GM12878 (cell line): ENCODE measurements at regions of chr6 and their contacts with region 1.

Region 1: GRCh38 chr6:32589598-32590449 is at the start of gene HLA-DRB1:
- DNase-seq: peak; percentile 91
- ATAC-seq: peak; percentile 89
- H3K4me3 ChIP-seq: peak within 1 kb of the TSS; percentile 72
- H3K27ac ChIP-seq: peak within 1 kb of the TSS; percentile 93
- H3K4me1 ChIP-seq: peaks cover 4% of the 10 kb centered on the region; the same call in 1 of the 2 replicates
- H3K27me3 ChIP-seq: no peaks in the 10 kb centered on the region
- CTCF ChIP-seq: no peak
- EP300 ChIP-seq: peak in 1 of 2 experiments; percentile 20; a peak in 1 of 4 replicates
- POLR2A ChIP-seq: peak; percentile 82
- RAD21 ChIP-seq: no peak
- polyA plus RNA-seq, gene HLA-DRB1: 312 to 364 TPM

Region 2: DNA sequence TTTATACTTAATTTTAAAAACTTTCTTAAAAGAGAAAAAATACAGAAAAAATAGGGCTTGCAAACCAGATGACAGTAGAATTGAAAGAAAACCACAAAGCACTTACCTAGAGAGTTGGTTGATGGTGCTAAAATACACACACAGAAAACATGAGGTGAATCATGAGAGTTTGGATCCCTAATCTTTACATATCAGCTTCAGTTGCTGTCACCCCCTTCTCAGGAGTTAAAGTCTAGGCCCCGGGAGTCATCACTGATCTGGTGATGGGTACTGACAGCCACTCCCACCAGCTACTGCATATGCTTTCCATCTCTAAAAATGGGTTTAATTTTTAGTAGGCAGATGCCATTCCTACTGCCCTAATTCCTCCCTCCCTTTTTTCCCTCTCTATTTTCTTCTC is 234.8 kb before region 1 on chr6:
- CTCF ChIA-PET with region 1: no interaction called
- POLR2A ChIA-PET with region 1: no interaction called
- RAD21 ChIA-PET with region 1: no interaction called
- SMC1A ChIA-PET with region 1: no interaction called
- in situ Hi-C with region 1: no loop called
- intact Hi-C with region 1: no loop called
- DNase-seq: no peak
- ATAC-seq: no peak
- H3K4me3 ChIP-seq: no peak overlapping the region
- H3K27ac ChIP-seq: no peak overlapping the region
- H3K4me1 ChIP-seq: no peaks in the 10 kb centered on the region
- H3K27me3 ChIP-seq: peaks cover 0 to 3% of the 10 kb centered on the region in 2 experiments; a peak in 1 of 4 replicates
- CTCF ChIP-seq: no peak
- EP300 ChIP-seq: no peak
- POLR2A ChIP-seq: no peak
- RAD21 ChIP-seq: no peak

Region 3: DNA sequence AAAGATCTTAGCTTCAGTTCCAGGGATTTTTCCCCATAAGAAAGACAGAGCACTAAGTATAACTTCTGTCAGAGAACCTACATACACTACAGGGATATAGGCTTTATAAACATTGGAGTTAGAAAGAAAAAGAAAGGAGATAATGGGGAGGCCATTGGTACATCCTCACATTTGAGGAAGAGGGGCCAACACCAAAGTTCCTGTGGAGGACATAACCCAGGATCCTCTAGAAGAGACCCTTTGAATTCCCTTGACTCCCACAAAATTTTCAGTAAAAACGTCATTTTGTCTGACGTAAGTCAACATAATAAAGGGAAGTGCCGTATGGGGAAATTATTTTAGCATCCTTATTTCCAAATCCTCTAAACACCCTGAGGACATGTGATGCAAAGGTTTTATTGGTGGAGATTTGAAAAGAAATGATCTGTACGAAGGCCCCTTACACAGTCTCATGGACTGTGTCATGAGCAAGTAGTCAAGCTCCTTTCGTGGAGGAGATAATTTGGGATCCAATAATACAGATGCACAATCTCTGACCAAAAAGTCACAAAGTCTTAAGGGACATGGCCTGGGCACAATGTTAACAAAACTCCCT is 116.9 kb before region 1 on chr6:
- CTCF ChIA-PET with region 1: no interaction called
- POLR2A ChIA-PET with region 1: interaction called, 11 read pairs
- RAD21 ChIA-PET with region 1: interaction called, 3 read pairs
- SMC1A ChIA-PET with region 1: interaction called, 3 read pairs
- in situ Hi-C with region 1: no loop called
- intact Hi-C with region 1: no loop called
- DNase-seq: no peak
- ATAC-seq: peak; percentile 29
- H3K4me3 ChIP-seq: peak overlapping the region; percentile 39; the same call in 1 of the 2 replicates
- H3K27ac ChIP-seq: peak overlapping the region; percentile 90
- H3K4me1 ChIP-seq: peaks cover 9% of the 10 kb centered on the region
- H3K27me3 ChIP-seq: no peaks in the 10 kb centered on the region
- CTCF ChIP-seq: no peak
- EP300 ChIP-seq: no peak
- POLR2A ChIP-seq: no peak
- RAD21 ChIP-seq: no peak

Region 4: DNA sequence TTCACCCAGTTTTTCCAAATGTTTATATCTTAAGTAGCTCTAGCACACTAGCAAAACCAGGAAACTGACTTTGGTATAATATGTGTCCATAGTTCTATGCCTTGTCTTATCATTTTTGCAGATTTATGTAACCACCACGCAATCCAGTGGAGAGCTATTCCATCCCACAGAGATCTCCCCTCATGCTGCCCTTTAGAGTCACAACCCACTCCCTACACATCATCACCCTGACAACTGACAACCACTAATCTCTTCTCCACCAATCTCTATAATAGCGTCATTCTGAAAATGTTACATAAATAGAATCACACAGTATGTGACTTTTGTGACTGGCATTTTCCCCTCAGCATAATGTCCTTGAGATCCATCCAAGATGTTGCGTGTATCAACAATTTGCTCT is 88.8 kb before region 1 on chr6:
- CTCF ChIA-PET with region 1: no interaction called
- POLR2A ChIA-PET with region 1: no interaction called
- RAD21 ChIA-PET with region 1: no interaction called
- SMC1A ChIA-PET with region 1: no interaction called
- in situ Hi-C with region 1: no loop called
- intact Hi-C with region 1: no loop called
- DNase-seq: no peak
- ATAC-seq: no peak
- H3K4me3 ChIP-seq: no peak overlapping the region
- H3K27ac ChIP-seq: no peak overlapping the region
- H3K4me1 ChIP-seq: no peaks in the 10 kb centered on the region
- H3K27me3 ChIP-seq: no peaks in the 10 kb centered on the region
- CTCF ChIP-seq: no peak
- EP300 ChIP-seq: no peak
- POLR2A ChIP-seq: no peak
- RAD21 ChIP-seq: no peak

Region 5: GRCh38 chr6:32558426-32559057 is 31.3 kb before region 1 on chr6:
- CTCF ChIA-PET with region 1: no interaction called
- POLR2A ChIA-PET with region 1: interaction called, 6 read pairs
- RAD21 ChIA-PET with region 1: interaction called, 4 read pairs
- SMC1A ChIA-PET with region 1: interaction called, 3 read pairs
- in situ Hi-C with region 1: no loop called
- intact Hi-C with region 1: loop called (anchors 2 kb)
- DNase-seq: no peak
- ATAC-seq: peak; percentile 84
- H3K4me3 ChIP-seq: no peak overlapping the region
- H3K27ac ChIP-seq: no peak overlapping the region
- H3K4me1 ChIP-seq: no peaks in the 10 kb centered on the region; the same call in 1 of the 2 replicates
- H3K27me3 ChIP-seq: no peaks in the 10 kb centered on the region
- CTCF ChIP-seq: no peak; a peak in 1 of 6 replicates
- EP300 ChIP-seq: no peak
- POLR2A ChIP-seq: no peak
- RAD21 ChIP-seq: no peak

Region 6: GRCh38 chr6:32568561-32568960 is 21.3 kb before region 1 on chr6:
- CTCF ChIA-PET with region 1: no interaction called
- POLR2A ChIA-PET with region 1: no interaction called
- RAD21 ChIA-PET with region 1: no interaction called
- SMC1A ChIA-PET with region 1: no interaction called
- in situ Hi-C with region 1: no loop called
- intact Hi-C with region 1: no loop called
- DNase-seq: no peak
- ATAC-seq: no peak
- H3K4me3 ChIP-seq: no peak overlapping the region
- H3K27ac ChIP-seq: no peak overlapping the region
- H3K4me1 ChIP-seq: no peaks in the 10 kb centered on the region
- H3K27me3 ChIP-seq: no peaks in the 10 kb centered on the region
- CTCF ChIP-seq: no peak
- EP300 ChIP-seq: no peak
- POLR2A ChIP-seq: no peak
- RAD21 ChIP-seq: no peak

Region 7: DNA sequence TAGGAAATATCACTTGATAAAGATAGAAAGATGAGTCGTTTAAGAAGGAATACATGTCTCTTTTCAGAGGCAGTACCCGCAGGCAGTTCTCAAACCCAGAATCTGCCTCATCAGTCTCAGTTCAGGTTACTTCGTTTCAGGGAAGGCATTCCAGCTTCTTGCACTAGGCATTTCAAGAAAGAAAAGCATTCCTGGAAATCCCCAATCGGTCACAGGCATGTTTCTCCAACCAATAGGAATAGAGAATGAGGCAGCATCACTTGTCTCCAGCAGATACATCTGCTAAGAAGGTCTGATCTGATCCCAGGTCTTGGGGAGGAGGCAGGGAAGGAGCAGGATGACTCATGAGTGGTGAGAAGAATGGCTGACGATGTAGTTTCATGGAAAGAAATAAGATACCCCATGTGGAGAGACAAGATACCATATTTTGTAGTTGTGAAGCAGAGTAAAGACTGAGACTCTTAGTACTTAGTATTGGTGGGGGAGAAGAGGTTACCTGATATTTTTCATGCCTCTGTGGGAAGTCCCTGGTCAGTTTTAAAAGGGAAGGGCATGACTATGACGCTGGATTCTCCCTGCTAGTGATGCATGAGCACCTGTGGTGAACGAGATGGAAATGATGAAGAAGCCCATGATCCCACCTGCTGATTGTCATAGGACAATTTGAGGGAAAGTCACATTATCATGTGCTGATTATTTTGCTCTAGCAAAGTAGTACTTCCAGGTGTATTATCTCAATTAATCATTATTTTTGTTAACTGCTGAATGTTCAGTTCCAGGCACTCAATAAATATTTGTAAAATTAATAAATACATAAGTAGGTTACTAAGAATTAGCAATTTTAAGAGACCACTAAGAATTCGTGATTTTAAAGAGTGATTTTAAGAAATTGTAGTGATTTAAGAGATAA is 20.2 kb after region 1 on chr6:
- CTCF ChIA-PET with region 1: interaction called, 5 read pairs
- POLR2A ChIA-PET with region 1: interaction called, 34 read pairs
- RAD21 ChIA-PET with region 1: no interaction called
- SMC1A ChIA-PET with region 1: interaction called, 23 read pairs
- in situ Hi-C with region 1: no loop called
- intact Hi-C with region 1: loop called (anchors 2 kb)
- DNase-seq: peak; percentile 100
- ATAC-seq: peak; percentile 84
- H3K4me3 ChIP-seq: peak overlapping the region; percentile 3; the same call in 1 of the 2 replicates
- H3K27ac ChIP-seq: peak overlapping the region; percentile 95
- H3K4me1 ChIP-seq: peaks cover 17% of the 10 kb centered on the region
- H3K27me3 ChIP-seq: no peaks in the 10 kb centered on the region
- CTCF ChIP-seq: no peak
- EP300 ChIP-seq: peak; percentile 30 to 68; a peak in 2 of 4 replicates
- POLR2A ChIP-seq: peak; percentile 59; the same call in 1 of the 2 replicates
- RAD21 ChIP-seq: no peak

Region 8: GRCh38 chr6:32642720-32643106 is 52.9 kb after region 1 on chr6:
- CTCF ChIA-PET with region 1: interaction called, 7 read pairs
- POLR2A ChIA-PET with region 1: interaction called, 77 read pairs
- RAD21 ChIA-PET with region 1: interaction called, 12 read pairs
- SMC1A ChIA-PET with region 1: interaction called, 18 read pairs
- in situ Hi-C with region 1: no loop called
- intact Hi-C with region 1: loop called (anchors 5 kb)
- DNase-seq: no peak
- ATAC-seq: peak; percentile 45
- H3K4me3 ChIP-seq: no peak overlapping the region
- H3K27ac ChIP-seq: no peak overlapping the region
- H3K4me1 ChIP-seq: peaks cover 4% of the 10 kb centered on the region
- H3K27me3 ChIP-seq: no peaks in the 10 kb centered on the region
- CTCF ChIP-seq: peak in 1 of 3 experiments; percentile 2; a peak in 1 of 6 replicates
- EP300 ChIP-seq: no peak
- POLR2A ChIP-seq: peak; percentile 53; the same call in 1 of the 2 replicates
- RAD21 ChIP-seq: no peak

Region 9: GRCh38 chr6:33040157-33040556 is 450.3 kb after region 1 on chr6:
- CTCF ChIA-PET with region 1: no interaction called
- POLR2A ChIA-PET with region 1: no interaction called
- RAD21 ChIA-PET with region 1: no interaction called
- SMC1A ChIA-PET with region 1: no interaction called
- in situ Hi-C with region 1: no loop called
- intact Hi-C with region 1: no loop called
- DNase-seq: peak; percentile 41
- ATAC-seq: peak; percentile 91
- H3K4me3 ChIP-seq: no peak overlapping the region
- H3K27ac ChIP-seq: no peak overlapping the region
- H3K4me1 ChIP-seq: peaks cover 7% of the 10 kb centered on the region; the same call in 1 of the 2 replicates
- H3K27me3 ChIP-seq: no peaks in the 10 kb centered on the region
- CTCF ChIP-seq: no peak
- EP300 ChIP-seq: no peak
- POLR2A ChIP-seq: no peak
- RAD21 ChIP-seq: no peak